Esophagus muscularis mucosa (tissue), 4 donors: ENCODE measurements at regions of chr4 and their contacts with region 1.

Region 1: GRCh38 chr4:183607894-183608293 is 51.1 kb downstream of the RWDD4 start:
- DNase-seq: no peak
- H3K4me3 ChIP-seq: no peak overlapping the region
- H3K27ac ChIP-seq: no peak overlapping the region
- H3K4me1 ChIP-seq: peaks cover 0 to 6% (median 0%) of the 10 kb centered on the region in 4 donors
- H3K27me3 ChIP-seq: no peaks in the 10 kb centered on the region
- CTCF ChIP-seq: no peak
- EP300 ChIP-seq: no peak
- POLR2A ChIP-seq: no peak

Region 2: GRCh38 chr4:182862141-182862875 is 745.6 kb before region 1 on chr4:
- intact Hi-C with region 1: no loop called
- DNase-seq: no peak
- H3K4me3 ChIP-seq: no peak overlapping the region
- H3K27ac ChIP-seq: no peak overlapping the region
- H3K4me1 ChIP-seq: no peaks in the 10 kb centered on the region
- H3K27me3 ChIP-seq: no peaks in the 10 kb centered on the region
- CTCF ChIP-seq: no peak
- EP300 ChIP-seq: no peak
- POLR2A ChIP-seq: no peak

Region 3: DNA sequence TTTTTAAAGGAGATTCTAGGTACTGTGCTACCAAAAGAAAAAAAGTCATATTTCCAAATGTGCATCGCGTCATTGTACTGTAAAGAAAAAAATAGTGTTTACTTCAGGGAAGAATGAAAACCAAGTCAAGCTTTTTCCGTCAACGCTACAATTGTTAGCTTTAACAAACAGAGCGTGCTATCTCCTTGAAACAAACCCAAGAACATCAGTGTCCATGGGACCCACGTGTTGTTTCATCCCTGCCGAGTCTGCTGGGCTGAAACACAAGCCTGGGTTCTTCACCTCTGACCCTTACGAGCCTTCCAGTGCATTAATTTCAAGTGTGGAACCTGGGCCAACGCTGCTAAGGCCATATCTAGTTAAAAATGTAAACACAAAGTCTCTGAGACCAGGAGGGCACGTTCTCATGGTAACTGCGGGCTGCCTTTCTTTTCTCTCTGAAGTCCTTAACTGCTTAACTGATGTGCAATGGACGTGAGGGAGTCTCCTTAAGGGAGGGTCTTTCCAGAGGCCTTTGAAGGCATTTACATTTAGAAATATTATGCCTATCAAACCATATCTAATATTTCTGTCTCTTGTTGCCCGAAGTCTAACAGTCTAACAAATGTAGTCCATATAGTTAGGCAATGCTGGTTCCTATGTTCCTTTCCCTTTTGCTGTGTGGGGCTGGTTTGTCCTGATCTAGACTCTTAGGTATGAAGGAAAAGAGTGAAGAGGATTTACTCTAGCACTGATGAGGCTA is 66.7 kb before region 1 on chr4:
- intact Hi-C with region 1: loop called (anchors 2 kb)
- DNase-seq: no peak
- H3K4me3 ChIP-seq: no peak overlapping the region
- H3K27ac ChIP-seq: peak overlapping the region; percentile 22 to 65 (median 40)
- H3K4me1 ChIP-seq: peaks cover 0 to 34% (median 33%) of the 10 kb centered on the region in 4 donors
- H3K27me3 ChIP-seq: no peaks in the 10 kb centered on the region
- CTCF ChIP-seq: no peak
- EP300 ChIP-seq: no peak
- POLR2A ChIP-seq: no peak